Naive thymus-derived CD4-positive, alpha-beta T cell (primary cell): ENCODE measurements at regions of chrX and their contacts with region 1.

Region 1: DNA sequence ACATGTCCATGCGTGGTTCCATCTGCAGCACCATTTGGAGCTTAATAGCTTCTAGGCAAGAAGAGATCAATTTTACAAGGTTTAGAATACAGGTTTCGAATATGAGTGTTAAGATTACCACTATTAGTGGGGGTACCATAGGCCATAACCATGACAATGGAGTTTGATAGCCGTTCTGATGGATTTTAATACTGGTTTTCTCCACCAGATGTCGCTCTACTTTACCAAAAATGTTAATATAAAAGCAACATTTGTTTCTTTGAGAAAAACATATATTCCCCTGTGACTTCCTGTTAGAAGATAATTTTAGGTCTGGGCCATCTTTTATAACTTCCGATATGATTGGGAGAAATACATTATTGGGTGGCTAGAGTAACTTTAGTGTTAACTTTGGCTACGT is 499.7 kb upstream of the POU3F4 start:
- DNase-seq: peak in 1 of 9 donors; percentile 8
- ATAC-seq: no peak
- H3K4me3 ChIP-seq: no peak overlapping the region
- H3K4me3 Mint-ChIP-seq: no peak overlapping the region
- H3K27ac ChIP-seq: no peak overlapping the region
- H3K27ac Mint-ChIP-seq: no peak overlapping the region
- H3K4me1 ChIP-seq: no peaks in the 10 kb centered on the region
- H3K4me1 Mint-ChIP-seq: no peaks in the 10 kb centered on the region
- H3K27me3 ChIP-seq: no peaks in the 10 kb centered on the region
- H3K27me3 Mint-ChIP-seq: no peaks in the 10 kb centered on the region

Region 2: DNA sequence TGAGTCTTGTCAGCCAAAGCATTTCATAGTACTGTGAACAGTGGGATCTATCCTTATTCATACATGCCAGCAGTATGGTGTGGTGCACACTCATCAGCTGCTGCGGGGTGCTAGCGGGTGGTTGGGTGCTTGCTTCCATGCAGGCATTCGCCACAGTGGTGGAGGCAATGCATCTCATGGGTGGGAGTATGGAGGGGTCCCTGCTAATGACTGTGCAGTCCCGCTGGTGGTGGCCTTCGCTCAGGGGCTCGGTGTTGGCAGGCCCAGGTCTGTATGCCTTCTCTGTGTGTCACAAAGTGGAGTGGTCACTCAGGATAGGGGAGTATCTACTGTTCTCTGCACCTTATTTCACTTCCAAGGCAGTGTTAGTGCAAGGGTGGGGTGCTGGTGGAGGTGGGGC is 622.2 kb after region 1 on chrX:
- CTCF ChIA-PET with region 1: no interaction called
- POLR2A ChIA-PET with region 1: no interaction called
- intact Hi-C with region 1: loop called in 1 of 2 experiments (anchors 2 kb)
- DNase-seq: no peak
- ATAC-seq: no peak
- H3K4me3 ChIP-seq: no peak overlapping the region
- H3K4me3 Mint-ChIP-seq: no peak overlapping the region
- H3K27ac ChIP-seq: no peak overlapping the region
- H3K27ac Mint-ChIP-seq: no peak overlapping the region
- H3K4me1 ChIP-seq: no peaks in the 10 kb centered on the region
- H3K4me1 Mint-ChIP-seq: peaks cover 0 to 6% (median 0%) of the 10 kb centered on the region in 7 donors
- H3K27me3 ChIP-seq: no peaks in the 10 kb centered on the region
- H3K27me3 Mint-ChIP-seq: no peaks in the 10 kb centered on the region

Region 3: GRCh38 chrX:83845397-83845796 is 837.0 kb after region 1 on chrX:
- CTCF ChIA-PET with region 1: no interaction called
- POLR2A ChIA-PET with region 1: no interaction called
- intact Hi-C with region 1: loop called in 1 of 2 experiments (anchors 2 kb)
- DNase-seq: peak in 4 of 9 donors; percentile 8 to 22 (median 19)
- ATAC-seq: no peak
- H3K4me3 ChIP-seq: no peak overlapping the region
- H3K4me3 Mint-ChIP-seq: no peak overlapping the region
- H3K27ac ChIP-seq: no peak overlapping the region
- H3K27ac Mint-ChIP-seq: no peak overlapping the region
- H3K4me1 ChIP-seq: no peaks in the 10 kb centered on the region
- H3K4me1 Mint-ChIP-seq: no peaks in the 10 kb centered on the region
- H3K27me3 ChIP-seq: no peaks in the 10 kb centered on the region
- H3K27me3 Mint-ChIP-seq: no peaks in the 10 kb centered on the region